A549 (cell line): ENCODE measurements at regions of chr6 and their contacts with region 1.

Region 1: DNA sequence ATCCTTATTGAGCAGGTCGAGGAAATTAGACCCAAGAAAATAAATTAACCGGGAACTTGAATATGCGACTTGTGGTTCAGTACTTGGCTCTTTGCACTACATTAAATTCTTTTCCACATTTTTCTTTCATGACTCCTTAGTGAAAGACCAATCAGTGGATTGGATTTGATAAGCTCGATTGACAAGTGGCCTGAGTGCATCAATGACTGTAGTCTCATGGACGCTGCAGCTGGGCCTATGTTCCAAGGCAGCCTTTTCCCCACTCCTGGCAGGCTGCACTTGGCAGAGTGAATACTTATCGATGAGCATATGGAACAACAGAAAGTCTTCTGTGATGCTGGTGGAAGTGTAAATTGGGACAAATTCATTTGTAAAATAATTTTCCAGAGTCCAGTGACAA is 210.8 kb upstream of the EXOC2 start:
- DNase-seq: no peak
- ATAC-seq: no peak
- H3K4me3 ChIP-seq: no peak overlapping the region
- H3K27ac ChIP-seq: peak overlapping the region; percentile 68 to 75; a peak in 5 of 6 replicates
- H3K4me1 ChIP-seq: peaks cover 38% of the 10 kb centered on the region
- CTCF ChIP-seq: no peak
- EP300 ChIP-seq: no peak
- POLR2A ChIP-seq: no peak
- RAD21 ChIP-seq: no peak

Region 2: DNA sequence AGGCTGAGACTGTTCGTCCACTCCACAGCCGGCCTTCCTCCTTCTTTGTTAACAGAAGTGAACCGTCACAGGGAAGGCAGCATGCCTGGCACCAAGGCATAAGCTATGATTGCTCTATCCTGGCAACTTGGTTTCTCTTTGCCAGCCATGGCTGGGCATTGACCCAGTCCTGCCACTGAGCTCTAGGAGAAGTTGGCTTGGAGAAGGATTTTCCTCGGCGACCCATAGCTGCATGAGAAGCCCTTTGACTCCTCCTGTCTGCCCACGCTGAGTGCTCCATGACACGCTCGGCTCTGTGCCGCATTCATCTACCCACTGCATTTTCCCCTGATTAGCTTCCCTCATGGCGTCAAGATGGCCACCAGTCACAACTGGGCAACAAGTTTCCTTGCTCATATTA is 99.0 kb before region 1 on chr6:
- CTCF ChIA-PET with region 1: no interaction called
- POLR2A ChIA-PET with region 1: no interaction called
- DNase-seq: no peak
- ATAC-seq: no peak
- H3K4me3 ChIP-seq: no peak overlapping the region
- H3K27ac ChIP-seq: no peak overlapping the region
- H3K4me1 ChIP-seq: no peaks in the 10 kb centered on the region
- CTCF ChIP-seq: no peak
- EP300 ChIP-seq: no peak
- POLR2A ChIP-seq: no peak
- RAD21 ChIP-seq: no peak

Region 3: GRCh38 chr6:835476-836160 is 68.1 kb before region 1 on chr6:
- CTCF ChIA-PET with region 1: interaction called, 4 read pairs
- POLR2A ChIA-PET with region 1: interaction called, 12 read pairs
- DNase-seq: peak; percentile 18 to 45
- ATAC-seq: peak; percentile 72 to 80; a peak in 5 of 6 replicates
- H3K4me3 ChIP-seq: no peak overlapping the region
- H3K27ac ChIP-seq: peak overlapping the region; percentile 78 to 84
- H3K4me1 ChIP-seq: peaks cover 41% of the 10 kb centered on the region
- CTCF ChIP-seq: no peak
- EP300 ChIP-seq: no peak
- POLR2A ChIP-seq: no peak
- RAD21 ChIP-seq: no peak